Mucosa of descending colon (tissue), 3 donors: ENCODE measurements at regions of chr12 and their contacts with region 1.

Region 1: GRCh38 chr12:68223083-68223747 is 2.4 kb downstream of the IL26 start:
- DNase-seq: peak; percentile 57 to 86 (median 67)
- ATAC-seq: peak; percentile 99
- H3K4me3 ChIP-seq: no peak overlapping the region
- H3K4me1 ChIP-seq: no peaks in the 10 kb centered on the region
- CTCF ChIP-seq: peak; percentile 67

Region 2: GRCh38 chr12:68279227-68280054 is 56.2 kb after region 1 on chr12:
- intact Hi-C with region 1: no loop called
- DNase-seq: no peak
- ATAC-seq: no peak
- H3K4me3 ChIP-seq: no peak overlapping the region
- H3K4me1 ChIP-seq: no peaks in the 10 kb centered on the region
- CTCF ChIP-seq: no peak

Region 3: GRCh38 chr12:68317047-68317667 is 93.9 kb after region 1 on chr12:
- intact Hi-C with region 1: loop called (anchors 5 kb)
- DNase-seq: peak in 1 of 3 donors; percentile 68
- ATAC-seq: no peak
- H3K4me3 ChIP-seq: no peak overlapping the region
- H3K4me1 ChIP-seq: no peaks in the 10 kb centered on the region
- CTCF ChIP-seq: no peak